Tibial artery (tissue), 4 donors: ENCODE measurements at regions of chr12 and their contacts with region 1.

Region 1: GRCh38 chr12:6470375-6471163 is at the start of gene VAMP1:
- DNase-seq: peak; percentile 99
- H3K4me3 ChIP-seq: peak within 1 kb of the TSS; percentile 75 to 88
- H3K27ac ChIP-seq: peak within 1 kb of the TSS; percentile 78 to 88
- H3K4me1 ChIP-seq: peaks cover 0 to 30% (median 20%) of the 10 kb centered on the region in 4 donors
- H3K27me3 ChIP-seq: no peaks in the 10 kb centered on the region
- CTCF ChIP-seq: peak; percentile 6 to 35

Region 2: DNA sequence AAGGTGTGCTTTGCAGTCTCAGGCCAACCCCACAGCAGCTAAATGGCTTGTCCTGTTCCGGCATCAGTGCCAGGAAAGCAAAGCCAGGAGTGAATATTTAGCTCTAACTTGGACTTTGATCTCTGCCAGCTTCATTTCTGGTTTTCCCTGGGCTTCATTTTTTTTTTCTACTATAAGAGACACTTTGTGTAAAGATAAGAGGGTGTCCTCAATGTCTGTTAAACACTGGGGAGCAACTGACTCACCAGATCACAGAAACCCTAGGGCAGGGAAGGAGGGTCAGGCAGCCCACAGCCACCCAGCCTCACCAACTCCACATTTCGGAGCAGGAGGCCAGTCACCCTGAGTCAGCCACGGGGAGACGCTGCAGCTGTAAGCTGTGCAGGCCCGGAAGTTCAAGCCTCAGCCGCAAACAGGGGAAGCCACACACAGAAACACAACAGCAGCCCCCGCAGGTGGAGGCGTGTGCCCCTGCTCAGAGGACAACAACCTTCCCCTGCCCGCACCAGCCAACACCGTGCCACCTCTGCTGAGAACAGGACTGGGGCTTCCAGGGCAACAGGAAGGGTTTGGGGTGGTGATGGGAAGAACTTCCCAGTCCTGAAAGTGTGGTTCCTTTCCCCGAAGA is 135.0 kb before region 1 on chr12:
- intact Hi-C with region 1: loop called (anchors 5 kb)
- DNase-seq: peak; percentile 85 to 89
- H3K4me3 ChIP-seq: peak overlapping the region; percentile 97 to 99
- H3K27ac ChIP-seq: peak overlapping the region; percentile 99
- H3K4me1 ChIP-seq: peaks cover 0 to 79% (median 71%) of the 10 kb centered on the region in 4 donors
- H3K27me3 ChIP-seq: no peaks in the 10 kb centered on the region
- CTCF ChIP-seq: peak; percentile 45 to 54

Region 3: DNA sequence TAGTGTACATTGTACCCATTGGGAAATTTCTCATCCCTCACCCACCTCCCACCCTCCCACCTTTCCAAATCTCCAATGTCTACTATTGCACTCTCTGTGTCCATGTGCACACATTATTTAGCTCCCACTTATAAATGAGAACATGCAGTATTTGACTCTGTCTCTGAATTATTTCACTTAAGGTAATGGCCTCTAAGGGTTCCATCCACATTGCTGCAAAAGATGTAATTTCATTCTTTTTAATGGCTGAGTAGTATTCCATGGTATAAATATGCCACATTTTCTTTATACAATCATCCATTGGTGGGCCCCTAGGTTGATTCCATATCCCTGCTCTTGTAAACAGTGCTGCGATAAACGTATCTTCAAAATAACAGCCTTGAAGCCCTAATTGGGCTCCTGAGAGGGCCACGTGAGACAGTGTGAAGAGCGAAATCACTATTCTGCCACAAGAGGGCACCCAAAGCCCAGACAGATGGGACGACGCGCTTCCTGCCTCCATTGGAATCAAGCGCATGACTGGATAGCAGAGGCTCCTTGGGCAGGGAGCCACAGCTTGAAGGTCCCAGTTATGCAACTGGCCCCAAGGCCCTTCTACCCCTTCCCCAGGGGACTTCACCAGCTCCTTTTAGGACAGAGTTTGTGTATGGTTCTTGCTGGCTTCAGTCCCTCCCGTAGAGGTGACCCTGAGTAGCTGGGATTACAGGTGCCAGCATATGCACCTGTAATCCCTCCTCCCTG is 47.1 kb before region 1 on chr12:
- intact Hi-C with region 1: loop called (anchors 2 kb)
- DNase-seq: peak; percentile 89 to 95
- H3K4me3 ChIP-seq: no peak overlapping the region
- H3K27ac ChIP-seq: no peak overlapping the region
- H3K4me1 ChIP-seq: peaks cover 0 to 18% (median 8%) of the 10 kb centered on the region in 4 donors
- H3K27me3 ChIP-seq: no peaks in the 10 kb centered on the region
- CTCF ChIP-seq: peak; percentile 91 to 95

Region 4: DNA sequence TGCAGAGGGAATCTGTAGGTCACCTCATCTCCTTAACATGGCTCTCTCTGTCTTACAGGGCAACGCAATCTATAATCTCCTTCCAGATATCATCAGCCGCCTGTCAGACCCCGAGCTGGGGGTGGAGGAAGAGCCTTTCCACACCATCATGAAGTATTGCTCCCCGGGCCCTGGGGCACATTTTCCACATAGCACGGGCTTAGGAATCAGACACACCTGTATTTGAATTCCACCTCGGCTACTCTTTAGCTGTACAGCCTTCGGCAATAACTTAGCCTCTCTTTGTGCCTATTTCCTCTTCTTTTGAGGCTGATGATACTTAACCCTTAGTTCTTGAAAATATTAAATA is 58.3 kb after region 1 on chr12:
- intact Hi-C with region 1: loop called (anchors 10 kb)
- DNase-seq: no peak
- H3K4me3 ChIP-seq: no peak overlapping the region
- H3K27ac ChIP-seq: no peak overlapping the region
- H3K4me1 ChIP-seq: peaks cover 0 to 20% (median 17%) of the 10 kb centered on the region in 4 donors
- H3K27me3 ChIP-seq: no peaks in the 10 kb centered on the region
- CTCF ChIP-seq: no peak

Region 5: DNA sequence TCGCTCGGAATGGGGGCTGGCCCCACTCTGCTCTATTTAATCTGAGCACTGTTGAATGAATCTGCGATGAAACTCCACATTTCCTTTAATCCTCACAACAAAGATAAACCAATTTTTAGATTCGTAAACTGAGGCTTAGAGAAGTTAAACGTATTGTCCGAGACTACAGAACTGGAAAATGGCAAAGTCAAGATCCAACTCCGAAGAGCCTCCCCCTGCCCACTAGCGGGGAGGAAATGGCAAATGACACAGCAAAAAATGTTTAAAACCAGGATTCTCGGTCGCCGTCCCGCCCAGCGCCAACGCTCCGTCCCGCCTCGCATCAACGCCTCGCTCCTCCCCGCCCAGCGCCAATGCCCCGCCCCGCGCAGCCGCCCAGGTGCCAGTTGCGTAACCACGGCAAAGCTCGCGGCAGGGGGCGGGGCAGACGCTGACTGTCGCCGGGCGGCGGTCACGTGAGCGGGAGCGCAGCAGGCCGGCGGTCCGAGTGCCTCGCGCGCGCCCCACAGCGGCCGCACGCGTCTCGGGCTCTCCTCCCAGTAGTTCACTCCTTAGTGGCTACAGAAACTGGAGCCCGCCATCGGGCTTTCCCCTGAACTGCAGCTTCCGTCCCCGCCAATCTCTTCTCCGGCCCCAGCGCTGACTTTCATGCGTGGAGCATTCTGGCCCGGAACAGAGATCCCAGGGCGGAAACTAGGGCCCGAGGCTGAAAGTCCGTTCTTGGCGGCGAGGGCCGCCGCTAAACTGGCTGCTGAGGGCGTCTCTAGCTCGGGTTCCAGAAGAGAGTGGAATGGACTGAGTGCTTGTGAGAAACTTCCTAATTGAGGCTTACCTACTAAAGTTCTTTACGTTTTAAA is 420.4 kb after region 1 on chr12:
- intact Hi-C with region 1: no loop called
- DNase-seq: peak; percentile 94 to 99
- H3K4me3 ChIP-seq: peak overlapping the region; percentile 53 to 58
- H3K27ac ChIP-seq: peak overlapping the region; percentile 80 to 93
- H3K4me1 ChIP-seq: peaks cover 0 to 15% (median 5%) of the 10 kb centered on the region in 4 donors
- H3K27me3 ChIP-seq: peaks cover 0 to 3% of the 10 kb centered on the region in 2 donors
- CTCF ChIP-seq: peak; percentile 89 to 92